Activated CD4-positive, alpha-beta T cell treated with anti-CD3 and anti-CD28 coated beads for 36 hours (primary cell): ENCODE measurements at regions of chr15 and their contacts with region 1.

Region 1: GRCh38 chr15:93030430-93031105 is 58.4 kb downstream of the RGMA start:
- DNase-seq: peak; percentile 79
- ATAC-seq: peak; percentile 87
- H3K4me3 Mint-ChIP-seq: no peak overlapping the region
- H3K27ac Mint-ChIP-seq: peak overlapping the region; percentile 16
- H3K4me1 Mint-ChIP-seq: peaks cover 37% of the 10 kb centered on the region
- H3K27me3 Mint-ChIP-seq: no peaks in the 10 kb centered on the region

Region 2: DNA sequence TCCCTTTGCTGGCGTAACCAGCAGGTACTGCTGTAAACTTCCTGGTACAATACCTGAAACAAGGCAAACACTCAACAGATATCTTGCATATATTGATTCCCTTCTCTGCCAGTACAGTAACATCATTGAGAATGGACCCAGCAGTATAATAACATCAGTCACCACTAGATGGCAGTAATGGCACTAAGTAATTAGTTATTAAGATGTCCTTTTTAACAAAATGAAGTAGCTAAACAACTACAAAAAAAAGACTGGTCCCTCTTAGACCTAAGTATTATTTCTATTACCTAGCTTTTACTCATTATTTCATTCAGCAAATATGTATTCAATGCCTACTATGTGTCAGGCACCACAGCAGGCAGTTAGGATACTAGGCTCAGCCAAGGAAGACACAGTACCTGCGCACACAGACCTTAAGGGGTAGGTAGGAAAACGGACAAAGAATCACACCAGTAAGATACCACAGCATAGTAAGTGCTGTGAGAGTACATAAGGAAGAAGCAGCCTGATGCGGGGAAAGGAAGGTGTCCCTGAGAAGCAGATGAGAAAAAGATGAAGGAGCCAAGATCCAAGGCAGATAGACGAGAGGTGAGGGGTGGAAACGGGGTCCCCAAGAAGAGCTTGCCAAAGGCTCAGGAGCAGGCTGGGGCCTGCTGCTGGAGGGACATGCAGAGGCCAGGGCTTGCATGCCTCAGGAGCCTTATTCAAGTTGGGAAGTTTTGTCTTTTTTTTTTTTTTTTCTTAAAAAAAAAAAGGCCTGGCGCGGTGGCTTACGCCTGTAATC is 233.2 kb before region 1 on chr15:
- CTCF ChIA-PET with region 1: interaction called, 24 read pairs
- POLR2A ChIA-PET with region 1: no interaction called
- intact Hi-C with region 1: loop called (anchors 1 to 5 kb)
- DNase-seq: no peak
- ATAC-seq: peak; percentile 90
- H3K4me3 Mint-ChIP-seq: no peak overlapping the region
- H3K27ac Mint-ChIP-seq: peak overlapping the region; percentile 65
- H3K4me1 Mint-ChIP-seq: peaks cover 8% of the 10 kb centered on the region
- H3K27me3 Mint-ChIP-seq: no peaks in the 10 kb centered on the region

Region 3: DNA sequence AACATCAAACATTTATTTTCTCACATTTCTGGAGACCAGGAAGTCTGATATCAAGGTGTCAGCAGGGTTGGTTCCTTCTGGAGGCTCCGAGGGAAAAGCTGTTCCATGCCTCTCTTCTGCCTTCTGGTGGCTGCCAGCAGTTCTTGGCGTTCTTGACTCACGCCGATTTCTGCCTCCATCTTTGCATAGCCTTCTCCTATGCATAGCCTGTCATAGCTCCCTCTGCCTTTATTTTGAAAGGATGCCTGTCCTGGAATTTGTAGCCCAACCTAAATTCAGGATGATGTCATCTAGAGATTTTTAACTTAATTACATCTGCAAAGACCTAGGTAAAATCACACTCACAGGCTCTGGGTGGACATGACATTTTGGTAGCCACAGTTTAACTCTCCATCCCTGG is 12.0 kb before region 1 on chr15:
- CTCF ChIA-PET with region 1: interaction called, 40 read pairs
- POLR2A ChIA-PET with region 1: interaction called, 7 read pairs
- intact Hi-C with region 1: no loop called
- DNase-seq: no peak
- ATAC-seq: no peak
- H3K4me3 Mint-ChIP-seq: no peak overlapping the region
- H3K27ac Mint-ChIP-seq: peak overlapping the region; percentile 80
- H3K4me1 Mint-ChIP-seq: peaks cover 71% of the 10 kb centered on the region
- H3K27me3 Mint-ChIP-seq: no peaks in the 10 kb centered on the region

Region 4: DNA sequence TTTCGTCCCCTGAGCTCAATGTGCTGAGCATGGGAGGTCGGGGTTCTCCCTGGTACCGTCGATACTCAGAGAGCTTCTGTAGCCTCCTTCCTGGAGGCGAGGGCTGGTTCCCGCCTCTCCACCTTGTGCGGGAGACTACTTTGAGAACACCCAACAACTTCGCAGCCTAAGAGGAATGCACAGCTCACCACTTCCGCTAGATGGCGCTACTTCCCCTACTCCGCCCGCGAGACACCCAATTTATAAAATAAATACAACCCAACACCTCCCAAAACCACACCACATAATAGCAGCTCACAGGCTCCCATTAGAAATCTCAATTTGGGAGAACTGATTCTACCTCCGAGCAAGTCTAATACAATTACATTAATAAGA is 57.2 kb after region 1 on chr15:
- CTCF ChIA-PET with region 1: interaction called, 15 read pairs
- POLR2A ChIA-PET with region 1: no interaction called
- intact Hi-C with region 1: no loop called
- DNase-seq: peak; percentile 83
- ATAC-seq: peak; percentile 78
- H3K4me3 Mint-ChIP-seq: peak overlapping the region; percentile 64
- H3K27ac Mint-ChIP-seq: no peak overlapping the region
- H3K4me1 Mint-ChIP-seq: peaks cover 13% of the 10 kb centered on the region
- H3K27me3 Mint-ChIP-seq: peaks cover 51% of the 10 kb centered on the region

Region 5: GRCh38 chr15:93179072-93179471 is 148.5 kb after region 1 on chr15:
- CTCF ChIA-PET with region 1: no interaction called
- POLR2A ChIA-PET with region 1: no interaction called
- intact Hi-C with region 1: no loop called
- DNase-seq: no peak
- ATAC-seq: no peak
- H3K4me3 Mint-ChIP-seq: no peak overlapping the region
- H3K27ac Mint-ChIP-seq: no peak overlapping the region
- H3K4me1 Mint-ChIP-seq: no peaks in the 10 kb centered on the region
- H3K27me3 Mint-ChIP-seq: peaks cover 4% of the 10 kb centered on the region

Region 6: DNA sequence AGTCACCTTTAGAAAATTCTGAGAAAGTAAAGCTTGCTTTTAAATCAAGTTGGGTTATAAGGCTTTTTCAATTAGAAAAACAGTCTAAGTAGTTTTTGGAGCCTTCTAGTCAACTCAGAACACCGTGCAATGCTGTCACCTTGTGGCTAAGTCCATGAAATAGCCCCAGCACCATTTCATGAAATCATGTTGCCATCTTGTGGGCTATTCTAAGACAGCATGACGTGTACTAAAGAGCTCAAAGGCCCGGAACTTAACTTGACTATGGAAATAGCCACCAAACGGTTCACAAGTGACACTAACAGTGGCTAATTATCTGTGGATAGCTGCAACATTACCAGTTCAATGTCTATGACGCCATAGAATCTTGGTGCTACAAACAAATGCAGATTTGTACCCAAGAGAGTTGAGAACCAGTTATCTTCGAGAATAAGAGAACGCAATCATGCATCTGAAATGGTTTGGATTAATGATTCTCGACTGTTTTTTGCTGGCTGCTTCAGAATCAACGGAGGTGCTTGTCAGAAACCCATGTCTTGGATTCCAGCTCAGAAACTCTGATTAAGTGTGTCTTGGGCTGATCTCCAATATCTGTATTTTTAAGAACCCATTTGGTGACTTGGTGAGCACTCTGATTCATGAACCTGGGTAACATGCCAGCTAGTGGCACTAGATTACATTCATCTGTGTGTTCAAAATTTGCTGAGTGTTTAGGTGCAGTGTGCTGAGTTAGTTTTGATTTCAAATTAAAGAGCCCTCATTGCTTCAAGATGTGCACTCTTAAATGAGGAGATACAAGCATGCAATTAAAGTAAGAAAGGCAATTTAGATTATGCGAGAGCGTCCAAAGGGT is 1089.6 kb after region 1 on chr15:
- CTCF ChIA-PET with region 1: interaction called, 13 read pairs
- POLR2A ChIA-PET with region 1: interaction called, 3 read pairs
- intact Hi-C with region 1: loop called (anchors 1 to 2 kb)
- DNase-seq: peak; percentile 68
- ATAC-seq: peak; percentile 100
- H3K4me3 Mint-ChIP-seq: no peak overlapping the region
- H3K27ac Mint-ChIP-seq: no peak overlapping the region
- H3K4me1 Mint-ChIP-seq: no peaks in the 10 kb centered on the region
- H3K27me3 Mint-ChIP-seq: no peaks in the 10 kb centered on the region